ENCODE measurements at regions of chr4 and their contacts with region 1.

Region 1: GRCh38 chr4:171448919-171449481 is 364.2 kb upstream of the GALNTL6 start:
- DNase-seq: no peak
- ATAC-seq: no peak
- H3K4me3 Mint-ChIP-seq: no peak overlapping the region
- H3K27ac Mint-ChIP-seq: no peak overlapping the region
- H3K4me1 Mint-ChIP-seq: no peaks in the 10 kb centered on the region
- H3K27me3 Mint-ChIP-seq: no peaks in the 10 kb centered on the region

Region 2: DNA sequence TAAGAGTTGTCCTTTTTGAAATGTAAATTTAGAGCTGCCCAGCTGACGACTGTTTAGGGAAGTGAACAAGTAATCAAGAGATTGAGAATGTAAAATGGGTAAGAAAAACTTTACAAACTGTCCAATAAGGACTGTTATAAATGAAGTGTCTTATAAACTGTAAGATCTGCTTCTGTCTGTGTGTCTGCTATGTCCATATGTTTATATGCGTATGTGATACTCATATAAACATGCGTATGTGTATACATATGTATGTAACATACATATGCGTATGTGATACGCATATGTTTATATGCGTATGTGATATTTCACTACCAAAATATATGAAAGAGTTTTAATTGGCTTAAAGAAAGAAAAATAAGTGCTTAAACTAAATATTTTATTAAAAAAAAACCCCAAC is 51.8 kb before region 1 on chr4:
- CTCF ChIA-PET with region 1: no interaction called
- POLR2A ChIA-PET with region 1: no interaction called
- intact Hi-C with region 1: no loop called
- DNase-seq: no peak
- ATAC-seq: no peak
- H3K4me3 Mint-ChIP-seq: no peak overlapping the region
- H3K27ac Mint-ChIP-seq: no peak overlapping the region
- H3K4me1 Mint-ChIP-seq: no peaks in the 10 kb centered on the region
- H3K27me3 Mint-ChIP-seq: no peaks in the 10 kb centered on the region

Region 3: GRCh38 chr4:171461191-171461590 is 12.2 kb after region 1 on chr4:
- CTCF ChIA-PET with region 1: interaction called, 3 read pairs
- POLR2A ChIA-PET with region 1: no interaction called
- intact Hi-C with region 1: loop called in 1 of 2 experiments (anchors 1 kb)
- DNase-seq: no peak
- ATAC-seq: no peak
- H3K4me3 Mint-ChIP-seq: no peak overlapping the region
- H3K27ac Mint-ChIP-seq: no peak overlapping the region
- H3K4me1 Mint-ChIP-seq: no peaks in the 10 kb centered on the region
- H3K27me3 Mint-ChIP-seq: no peaks in the 10 kb centered on the region

Region 4: GRCh38 chr4:172188249-172188938 is 739.4 kb after region 1 on chr4:
- CTCF ChIA-PET with region 1: no interaction called
- POLR2A ChIA-PET with region 1: no interaction called
- intact Hi-C with region 1: no loop called
- DNase-seq: no peak
- ATAC-seq: no peak
- H3K4me3 Mint-ChIP-seq: no peak overlapping the region
- H3K27ac Mint-ChIP-seq: no peak overlapping the region
- H3K4me1 Mint-ChIP-seq: no peaks in the 10 kb centered on the region
- H3K27me3 Mint-ChIP-seq: no peaks in the 10 kb centered on the region

Measured in activated CD4-positive, alpha-beta T cell treated with anti-CD3 and anti-CD28 coated beads for 36 hours (primary cell).